Prostate gland (tissue), 2 donors: ENCODE measurements at regions of chr3 and their contacts with region 1.

Region 1: GRCh38 chr3:145776782-145777408 is 384.1 kb downstream of the PLOD2 start:
- DNase-seq: peak; percentile 36
- H3K4me3 ChIP-seq: no peak overlapping the region
- H3K27ac ChIP-seq: no peak overlapping the region
- H3K4me1 ChIP-seq: no peaks in the 10 kb centered on the region
- H3K27me3 ChIP-seq: no peaks in the 10 kb centered on the region
- CTCF ChIP-seq: peak in 2 of 4 experiments; percentile 34 to 51
- POLR2A ChIP-seq: no peak

Region 2: DNA sequence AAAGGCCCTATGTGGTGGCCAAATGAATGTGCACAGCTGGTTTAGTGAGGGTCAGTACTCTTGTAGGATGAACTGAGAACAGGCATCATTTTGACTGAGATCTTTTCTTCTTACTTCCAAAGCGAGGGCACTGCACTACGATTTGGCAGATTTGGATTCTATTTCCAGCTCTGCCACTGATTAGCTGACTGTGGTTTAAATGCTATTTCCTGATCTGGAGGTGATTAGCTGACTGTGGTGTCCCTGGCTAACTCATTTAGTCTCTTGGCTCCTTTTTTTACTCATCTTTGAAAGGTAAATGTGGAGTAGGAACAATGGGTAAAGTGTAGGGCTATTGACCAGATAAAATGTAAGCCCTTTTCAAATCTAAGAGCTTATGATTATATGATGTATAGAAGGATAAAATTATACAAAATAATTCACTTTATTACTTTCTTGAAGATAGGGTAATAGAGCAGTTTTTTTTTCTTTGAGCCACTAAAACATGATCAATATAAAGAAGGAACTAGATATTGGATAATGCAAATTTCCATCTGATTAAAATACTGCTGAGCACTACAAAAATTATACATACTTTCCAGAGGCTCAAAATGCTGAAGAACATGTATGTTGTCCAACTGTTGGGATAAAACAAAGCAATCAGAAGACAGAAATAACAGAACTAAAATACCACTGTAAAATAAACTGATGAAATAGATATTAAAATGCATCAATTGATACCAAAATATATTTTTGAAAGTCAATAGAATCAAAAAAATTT is 423.7 kb after region 1 on chr3:
- intact Hi-C with region 1: loop called (anchors 10 kb)
- DNase-seq: no peak
- H3K4me3 ChIP-seq: no peak overlapping the region
- H3K27ac ChIP-seq: no peak overlapping the region
- H3K4me1 ChIP-seq: no peaks in the 10 kb centered on the region
- H3K27me3 ChIP-seq: no peaks in the 10 kb centered on the region
- CTCF ChIP-seq: no peak
- POLR2A ChIP-seq: no peak